Testis (tissue), 5 donors: ENCODE measurements at regions of chr1 and their contacts with region 1.

Region 1: DNA sequence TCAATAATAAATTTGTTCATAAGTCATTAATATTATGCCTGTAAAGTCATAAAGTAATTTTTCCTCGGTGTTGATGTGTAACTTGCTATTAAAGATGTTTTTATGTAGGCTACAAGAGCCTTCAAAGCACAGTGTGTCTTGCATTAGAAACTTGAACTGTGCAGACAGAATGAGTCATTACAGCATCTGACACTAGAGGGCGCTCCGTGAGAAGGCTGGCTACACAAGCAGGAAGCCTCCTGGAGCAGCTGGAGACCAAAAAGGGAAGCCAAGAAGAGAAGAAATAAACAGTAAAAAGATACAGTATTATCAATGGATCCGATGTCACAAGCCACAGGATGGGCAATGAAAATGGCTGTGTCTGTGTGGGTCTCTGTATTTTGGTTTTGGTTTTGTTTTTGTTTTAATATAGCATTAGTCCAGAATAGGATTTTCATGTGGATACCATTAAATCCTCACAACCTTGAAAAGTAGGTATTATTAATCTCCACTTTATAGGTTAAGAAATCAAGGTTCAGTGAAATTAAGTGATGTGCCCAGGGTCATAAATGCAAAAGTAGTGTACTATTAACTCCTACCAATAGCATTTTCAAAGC is 16.1 kb upstream of the LRRC8D start:
- DNase-seq: peak; percentile 96
- H3K4me3 ChIP-seq: no peak overlapping the region
- H3K27ac ChIP-seq: no peak overlapping the region
- H3K4me1 ChIP-seq: no peaks in the 10 kb centered on the region
- H3K27me3 ChIP-seq: no peaks in the 10 kb centered on the region
- CTCF ChIP-seq: peak; percentile 79 to 86 (median 80)
- POLR2A ChIP-seq: no peak

Region 2: GRCh38 chr1:89657886-89658285 is 146.9 kb before region 1 on chr1:
- intact Hi-C with region 1: no loop called
- DNase-seq: no peak
- H3K4me3 ChIP-seq: no peak overlapping the region
- H3K27ac ChIP-seq: no peak overlapping the region
- H3K4me1 ChIP-seq: peaks cover 24% of the 10 kb centered on the region
- H3K27me3 ChIP-seq: no peaks in the 10 kb centered on the region
- CTCF ChIP-seq: no peak
- POLR2A ChIP-seq: no peak

Region 3: DNA sequence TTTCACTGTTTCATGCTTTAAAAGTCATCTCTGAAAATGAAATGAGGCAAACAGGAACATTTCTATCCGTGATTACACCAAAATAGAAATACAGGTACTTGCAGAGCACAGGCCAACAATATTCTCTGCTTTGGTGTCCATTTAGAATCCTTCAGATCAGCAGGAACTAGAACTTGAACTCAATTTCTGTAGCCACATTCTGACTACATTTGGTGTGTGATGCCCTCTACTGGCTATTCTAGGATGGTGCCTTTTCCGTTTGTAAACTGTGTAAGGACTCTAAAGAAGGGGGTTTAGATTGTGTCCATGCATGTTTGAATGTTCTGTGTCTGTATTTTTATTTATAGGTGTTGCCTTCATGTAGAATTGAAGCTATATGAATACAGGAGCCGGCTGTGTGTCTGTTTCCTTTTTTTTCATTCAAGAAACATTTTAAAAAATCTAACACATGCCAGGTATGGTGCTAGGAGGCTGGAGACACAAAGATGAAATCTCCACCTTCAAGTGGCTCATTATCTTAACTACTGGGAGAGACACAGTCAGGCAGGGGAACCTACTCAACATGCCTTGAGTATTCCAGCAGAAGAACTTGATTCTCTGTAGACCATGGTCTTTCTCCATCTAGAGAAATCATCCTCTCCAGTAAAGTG is 182.6 kb after region 1 on chr1:
- intact Hi-C with region 1: loop called (anchors 10 kb)
- DNase-seq: peak; percentile 79
- H3K4me3 ChIP-seq: no peak overlapping the region
- H3K27ac ChIP-seq: no peak overlapping the region
- H3K4me1 ChIP-seq: no peaks in the 10 kb centered on the region
- H3K27me3 ChIP-seq: no peaks in the 10 kb centered on the region
- CTCF ChIP-seq: peak; percentile 74 to 81 (median 79)
- POLR2A ChIP-seq: no peak

Region 4: DNA sequence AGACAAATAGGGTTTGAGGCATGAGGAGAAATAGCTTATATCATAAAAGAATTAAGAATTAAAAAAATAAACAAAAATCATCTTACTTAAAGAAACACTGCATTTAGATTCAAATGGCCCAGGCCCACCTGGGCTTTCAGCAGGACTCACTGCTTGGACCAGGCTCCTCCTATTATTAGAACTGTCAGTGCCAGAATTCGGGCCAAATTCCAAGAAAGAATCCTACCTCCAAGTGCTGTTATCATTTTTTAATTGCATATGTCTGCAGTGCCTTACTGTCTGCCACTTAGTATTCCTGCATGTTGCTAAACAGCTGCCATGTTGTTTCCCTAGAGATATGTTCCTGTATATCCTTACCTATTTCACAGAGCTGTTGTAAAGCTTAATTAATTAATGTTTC is 800.3 kb after region 1 on chr1:
- intact Hi-C with region 1: no loop called
- DNase-seq: no peak
- H3K4me3 ChIP-seq: no peak overlapping the region
- H3K27ac ChIP-seq: no peak overlapping the region
- H3K4me1 ChIP-seq: no peaks in the 10 kb centered on the region
- H3K27me3 ChIP-seq: no peaks in the 10 kb centered on the region
- CTCF ChIP-seq: no peak
- POLR2A ChIP-seq: no peak